ENCODE measurements at regions of chr1 and their contacts with region 1.

Region 1: GRCh38 chr1:192477630-192478029 is 97.9 kb upstream of the RGS1 start:
- DNase-seq: no peak
- H3K4me3 Mint-ChIP-seq: no peak overlapping the region
- H3K27ac Mint-ChIP-seq: no peak overlapping the region
- H3K4me1 Mint-ChIP-seq: no peaks in the 10 kb centered on the region
- H3K27me3 Mint-ChIP-seq: no peaks in the 10 kb centered on the region

Region 2: GRCh38 chr1:192343344-192343743 is 134.3 kb before region 1 on chr1:
- CTCF ChIA-PET with region 1: no interaction called
- POLR2A ChIA-PET with region 1: no interaction called
- intact Hi-C with region 1: no loop called
- DNase-seq: no peak
- H3K4me3 Mint-ChIP-seq: no peak overlapping the region
- H3K27ac Mint-ChIP-seq: no peak overlapping the region
- H3K4me1 Mint-ChIP-seq: no peaks in the 10 kb centered on the region
- H3K27me3 Mint-ChIP-seq: no peaks in the 10 kb centered on the region

Region 3: DNA sequence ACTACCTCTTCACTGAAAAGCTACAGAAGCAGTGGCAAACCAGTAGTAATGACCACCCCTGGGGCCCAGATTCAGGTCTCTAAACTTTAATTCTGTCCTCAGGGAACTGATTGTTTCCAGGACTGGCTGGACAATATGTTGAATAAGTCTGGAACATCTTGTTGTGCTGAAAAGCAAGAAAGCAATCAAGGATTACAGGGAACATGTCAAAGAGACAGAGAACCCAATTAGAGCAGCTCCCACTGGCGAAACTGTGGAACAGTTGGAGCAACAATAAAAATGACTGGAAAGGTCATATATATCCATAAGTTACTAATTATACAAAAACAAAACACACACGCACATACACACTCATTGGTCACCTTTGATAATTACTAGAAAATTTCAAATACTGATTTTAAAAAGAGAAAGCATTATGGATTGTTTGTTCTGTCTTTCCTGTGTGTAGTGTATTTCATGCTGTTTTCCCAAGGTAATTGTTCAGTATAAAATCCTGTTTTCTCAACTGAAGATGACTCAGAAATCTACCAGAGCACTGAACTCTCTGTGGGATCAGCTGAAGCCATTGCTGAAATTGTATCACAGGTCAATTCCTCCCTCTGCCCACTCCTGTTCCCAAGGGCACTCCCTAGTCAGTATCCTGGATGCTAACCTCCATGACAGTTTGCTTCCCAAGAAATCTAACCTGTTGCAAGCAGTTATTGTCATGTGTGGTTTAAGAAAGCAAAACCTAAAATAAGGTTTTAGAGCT is 14.3 kb after region 1 on chr1:
- CTCF ChIA-PET with region 1: interaction called, 10 read pairs
- POLR2A ChIA-PET with region 1: no interaction called
- intact Hi-C with region 1: no loop called
- DNase-seq: no peak
- H3K4me3 Mint-ChIP-seq: no peak overlapping the region
- H3K27ac Mint-ChIP-seq: no peak overlapping the region
- H3K4me1 Mint-ChIP-seq: peaks cover 5% of the 10 kb centered on the region
- H3K27me3 Mint-ChIP-seq: no peaks in the 10 kb centered on the region

Region 4: GRCh38 chr1:192530254-192530653 is 52.6 kb after region 1 on chr1:
- CTCF ChIA-PET with region 1: no interaction called
- POLR2A ChIA-PET with region 1: no interaction called
- intact Hi-C with region 1: no loop called
- DNase-seq: no peak
- H3K4me3 Mint-ChIP-seq: no peak overlapping the region
- H3K27ac Mint-ChIP-seq: peak overlapping the region; percentile 47
- H3K4me1 Mint-ChIP-seq: peaks cover 27% of the 10 kb centered on the region
- H3K27me3 Mint-ChIP-seq: peaks cover 3% of the 10 kb centered on the region

Region 5: GRCh38 chr1:192592981-192593708 is 115.5 kb after region 1 on chr1:
- CTCF ChIA-PET with region 1: interaction called, 16 read pairs
- POLR2A ChIA-PET with region 1: no interaction called
- intact Hi-C with region 1: no loop called
- DNase-seq: no peak
- H3K4me3 Mint-ChIP-seq: no peak overlapping the region
- H3K27ac Mint-ChIP-seq: no peak overlapping the region
- H3K4me1 Mint-ChIP-seq: no peaks in the 10 kb centered on the region
- H3K27me3 Mint-ChIP-seq: peaks cover 4% of the 10 kb centered on the region

Region 6: GRCh38 chr1:192609110-192610079 is 131.8 kb after region 1 on chr1:
- CTCF ChIA-PET with region 1: interaction called, 98 read pairs
- POLR2A ChIA-PET with region 1: no interaction called
- intact Hi-C with region 1: loop called (anchors 1 kb)
- DNase-seq: peak; percentile 75
- H3K4me3 Mint-ChIP-seq: peak overlapping the region; percentile 28
- H3K27ac Mint-ChIP-seq: no peak overlapping the region
- H3K4me1 Mint-ChIP-seq: peaks cover 17% of the 10 kb centered on the region
- H3K27me3 Mint-ChIP-seq: no peaks in the 10 kb centered on the region

Region 7: DNA sequence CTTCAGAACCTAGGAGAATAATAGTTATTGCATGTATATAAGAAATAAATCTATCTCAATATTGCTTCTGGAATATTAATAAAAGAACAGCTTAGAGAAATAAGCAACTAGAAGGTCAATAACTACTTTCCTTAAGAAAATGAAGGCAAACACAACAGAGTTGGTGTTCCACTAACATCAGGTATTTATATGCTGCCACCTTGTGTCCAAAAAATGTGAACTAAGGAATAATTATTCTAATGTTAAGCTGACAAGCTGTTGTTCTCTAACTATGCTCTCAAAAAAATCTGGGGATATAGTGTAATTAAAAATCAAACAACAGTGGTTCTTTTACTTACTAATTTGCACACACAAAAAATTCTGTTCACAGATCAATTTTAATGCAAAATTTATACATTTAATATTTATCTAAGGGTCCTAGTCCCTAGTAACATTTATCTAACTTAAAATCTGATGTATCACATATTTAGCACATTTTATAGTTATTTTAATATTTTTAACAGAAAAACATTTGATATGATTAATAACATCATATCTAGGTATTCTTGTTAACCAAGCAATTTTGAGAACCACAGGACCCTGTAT is 541.9 kb after region 1 on chr1:
- CTCF ChIA-PET with region 1: interaction called, 20 read pairs
- POLR2A ChIA-PET with region 1: no interaction called
- intact Hi-C with region 1: loop called (anchors 1 kb)
- DNase-seq: no peak
- H3K4me3 Mint-ChIP-seq: no peak overlapping the region
- H3K27ac Mint-ChIP-seq: no peak overlapping the region
- H3K4me1 Mint-ChIP-seq: no peaks in the 10 kb centered on the region
- H3K27me3 Mint-ChIP-seq: no peaks in the 10 kb centered on the region

Measured in activated CD4-positive, alpha-beta memory T cell treated with anti-CD3 and anti-CD28 coated beads for 36 hours (primary cell).